ENCODE measurements at regions of chr17 and their contacts with region 1.

Region 1: DNA sequence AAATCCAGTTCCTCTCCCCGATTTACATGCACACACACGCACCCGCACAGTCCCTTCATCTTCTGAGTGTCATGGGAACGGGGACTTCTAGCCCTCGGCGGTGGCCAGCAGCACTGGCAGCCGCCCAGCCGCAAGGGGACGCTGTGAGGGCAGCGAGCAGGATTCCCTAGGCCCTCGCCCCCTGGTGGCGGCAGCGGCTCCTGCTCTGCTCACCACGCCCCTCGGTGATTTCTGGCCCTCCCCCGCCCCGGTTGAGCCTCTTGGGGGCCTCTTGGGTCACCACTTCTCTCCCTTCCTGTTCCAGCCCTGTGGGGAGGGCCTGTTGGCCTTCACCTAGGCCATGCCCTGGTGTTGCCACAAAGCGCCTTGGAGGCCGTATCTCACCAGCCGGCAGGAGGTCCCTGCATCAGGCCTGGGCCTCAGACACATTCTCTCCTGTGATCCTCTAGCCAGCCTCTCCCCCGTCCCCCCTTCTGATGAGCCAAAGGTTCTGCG is 75.2 kb upstream of the KSR1 start:
- DNase-seq: peak; percentile 65 to 72 (median 68)
- H3K4me3 ChIP-seq: no peak overlapping the region
- H3K4me3 Mint-ChIP-seq: no peak overlapping the region
- H3K27ac ChIP-seq: no peak overlapping the region
- H3K27ac Mint-ChIP-seq: peak overlapping the region in 2 of 7 donors; percentile 57 to 71
- H3K4me1 ChIP-seq: peaks cover 4% of the 10 kb centered on the region
- H3K4me1 Mint-ChIP-seq: peaks cover 0 to 8% (median 2%) of the 10 kb centered on the region in 4 donors
- H3K27me3 ChIP-seq: no peaks in the 10 kb centered on the region
- H3K27me3 Mint-ChIP-seq: peaks cover 1 to 8% of the 10 kb centered on the region in 2 donors

Region 2: GRCh38 chr17:27353461-27354050 is 27.5 kb before region 1 on chr17:
- CTCF ChIA-PET with region 1: interaction called, 18 read pairs
- POLR2A ChIA-PET with region 1: no interaction called
- intact Hi-C with region 1: loop called (anchors 1 kb)
- DNase-seq: peak; percentile 82 to 88 (median 83)
- H3K4me3 ChIP-seq: peak overlapping the region; percentile 36 to 68
- H3K4me3 Mint-ChIP-seq: peak overlapping the region; percentile 68 to 89 (median 86)
- H3K27ac ChIP-seq: peak overlapping the region; percentile 80
- H3K27ac Mint-ChIP-seq: peak overlapping the region; percentile 75 to 97 (median 95)
- H3K4me1 ChIP-seq: peaks cover 16% of the 10 kb centered on the region
- H3K4me1 Mint-ChIP-seq: peaks cover 10 to 27% (median 19%) of the 10 kb centered on the region in 4 donors
- H3K27me3 ChIP-seq: no peaks in the 10 kb centered on the region
- H3K27me3 Mint-ChIP-seq: no peaks in the 10 kb centered on the region

Region 3: GRCh38 chr17:27396941-27397340 is 15.9 kb after region 1 on chr17:
- CTCF ChIA-PET with region 1: no interaction called
- POLR2A ChIA-PET with region 1: no interaction called
- intact Hi-C with region 1: no loop called
- DNase-seq: no peak
- H3K4me3 ChIP-seq: no peak overlapping the region
- H3K4me3 Mint-ChIP-seq: no peak overlapping the region
- H3K27ac ChIP-seq: no peak overlapping the region
- H3K27ac Mint-ChIP-seq: no peak overlapping the region
- H3K4me1 ChIP-seq: no peaks in the 10 kb centered on the region
- H3K4me1 Mint-ChIP-seq: no peaks in the 10 kb centered on the region
- H3K27me3 ChIP-seq: no peaks in the 10 kb centered on the region
- H3K27me3 Mint-ChIP-seq: peaks cover 14 to 20% of the 10 kb centered on the region in 2 donors